Left cardiac atrium (tissue), 4 donors: ENCODE measurements at regions of chr3 and their contacts with region 1.

Region 1: DNA sequence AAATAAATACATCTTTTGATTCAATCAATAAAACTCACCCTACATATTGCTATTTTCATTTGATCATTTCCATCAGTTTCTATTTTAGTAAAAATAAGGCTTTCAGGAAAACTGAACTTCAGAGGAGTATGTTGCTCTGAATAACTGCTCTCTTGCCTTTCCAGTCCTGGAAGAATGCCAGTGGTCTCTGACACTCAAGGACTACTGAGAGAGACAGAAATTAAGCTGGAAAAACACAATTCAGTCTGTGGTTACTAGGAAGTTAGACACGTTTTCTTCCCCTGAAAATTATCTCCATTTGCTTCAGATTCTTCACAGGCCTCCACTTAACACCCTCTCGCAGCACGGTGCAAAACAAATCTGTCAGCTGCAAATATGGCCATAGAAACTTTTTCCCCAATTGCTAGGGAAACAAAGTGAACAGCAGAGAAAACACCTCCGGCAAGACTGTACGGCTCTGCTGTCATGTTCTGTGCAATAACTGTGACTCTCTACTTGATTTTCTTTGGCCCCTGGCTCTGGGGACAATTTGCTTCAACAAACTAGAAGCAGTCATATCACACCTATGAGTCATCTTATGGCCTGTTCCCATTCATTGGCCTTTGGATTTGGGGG is 353.0 kb downstream of the MAGI1 start:
- DNase-seq: no peak
- ATAC-seq: peak; percentile 38

Region 2: GRCh38 chr3:65732051-65732935 is 46.6 kb after region 1 on chr3:
- intact Hi-C with region 1: loop called in 1 of 2 experiments (anchors 10 kb)
- DNase-seq: no peak
- ATAC-seq: peak; percentile 62 to 82